ENCODE measurements at regions of chr12 and their contacts with region 1.

Region 1: DNA sequence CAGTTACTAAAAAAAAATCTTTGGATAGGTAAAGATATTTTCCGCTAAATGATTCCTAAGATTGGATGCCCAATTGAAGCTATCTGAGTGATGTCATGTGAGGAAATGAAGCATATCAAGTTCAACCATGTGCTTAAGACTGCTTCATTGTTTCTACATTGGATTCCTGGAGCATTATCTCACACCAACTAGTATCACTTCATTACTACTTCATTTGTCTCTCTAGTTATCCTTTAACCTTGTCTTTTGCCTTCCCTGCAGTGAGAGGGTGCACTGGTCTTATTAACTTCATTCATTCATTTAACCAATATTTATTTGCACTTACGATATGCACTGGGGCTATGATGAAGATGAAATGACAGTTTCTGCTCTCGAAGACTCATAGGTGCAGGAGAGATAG is 198.1 kb downstream of the SLC38A4 start:
- DNase-seq: no peak

Region 2: GRCh38 chr12:46372544-46373110 is 255.1 kb before region 1 on chr12 and contains the start of gene SLC38A2:
- in situ Hi-C with region 1: loop called (anchors 25 kb)
- DNase-seq: peak; percentile 92
- total RNA-seq, gene SLC38A2: 257 and 278 TPM in 2 replicates

Measured in SK-MEL-5 (cell line).